ENCODE measurements at regions of chr12 and their contacts with region 1.

Region 1: DNA sequence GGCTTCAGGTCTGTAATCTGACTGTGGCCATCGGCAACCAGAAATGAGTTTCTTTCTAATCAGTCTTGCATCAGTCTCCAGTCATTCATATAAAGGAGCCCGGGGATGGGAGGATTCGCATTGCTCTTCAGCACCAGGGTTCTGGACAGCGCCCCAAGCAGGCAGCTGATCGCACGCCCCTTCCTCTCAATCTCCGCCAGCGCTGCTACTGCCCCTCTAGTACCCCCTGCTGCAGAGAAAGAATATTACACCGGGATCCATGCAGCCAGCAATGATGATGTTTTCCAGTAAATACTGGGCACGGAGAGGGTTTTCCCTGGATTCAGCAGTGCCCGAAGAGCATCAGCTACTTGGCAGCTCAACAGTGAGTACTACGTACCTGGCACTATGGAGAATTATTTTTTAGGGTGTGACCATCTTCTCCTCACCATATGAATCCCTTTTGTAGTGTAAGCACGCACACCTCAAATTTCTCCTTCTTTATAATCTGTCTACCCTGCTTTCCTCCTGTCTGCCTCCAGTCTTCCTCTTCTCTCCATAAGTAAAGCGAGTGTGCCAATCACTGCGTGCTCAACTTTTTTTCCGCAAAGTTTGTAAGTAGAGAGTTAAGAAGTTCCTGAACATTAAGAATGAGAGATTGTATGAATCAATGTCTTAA is at the start of gene TPH2:
- DNase-seq: peak; percentile 51
- H3K4me3 Mint-ChIP-seq: no peak within 1 kb of the TSS
- H3K27ac Mint-ChIP-seq: peak within 1 kb of the TSS; percentile 1
- H3K4me1 Mint-ChIP-seq: peaks cover 18% of the 10 kb centered on the region
- H3K27me3 Mint-ChIP-seq: peaks cover 28% of the 10 kb centered on the region
- total RNA-seq, gene TPH2: not detected in 2 replicates

Region 2: GRCh38 chr12:71754461-71755145 is 184.3 kb before region 1 on chr12 and contains the start of gene RAB21:
- intact Hi-C with region 1: loop called (anchors 5 kb)
- DNase-seq: peak; percentile 97
- H3K4me3 Mint-ChIP-seq: peak within 1 kb of the TSS; percentile 93
- H3K27ac Mint-ChIP-seq: peak within 1 kb of the TSS; percentile 97
- H3K4me1 Mint-ChIP-seq: peaks cover 22% of the 10 kb centered on the region
- H3K27me3 Mint-ChIP-seq: peaks cover 27% of the 10 kb centered on the region
- total RNA-seq, gene RAB21: 100 and 105 TPM in 2 replicates